GM13976 (cell line): ENCODE measurements at regions of chr14 and their contacts with region 1.

Region 1: GRCh38 chr14:44912041-44912869 is 49.5 kb downstream of the KLHL28 start:
- DNase-seq: no peak
- CTCF ChIP-seq: no peak

Region 2: GRCh38 chr14:44010071-44010470 is 902.2 kb before region 1 on chr14:
- in situ Hi-C with region 1: no loop called
- DNase-seq: no peak
- CTCF ChIP-seq: no peak

Region 3: DNA sequence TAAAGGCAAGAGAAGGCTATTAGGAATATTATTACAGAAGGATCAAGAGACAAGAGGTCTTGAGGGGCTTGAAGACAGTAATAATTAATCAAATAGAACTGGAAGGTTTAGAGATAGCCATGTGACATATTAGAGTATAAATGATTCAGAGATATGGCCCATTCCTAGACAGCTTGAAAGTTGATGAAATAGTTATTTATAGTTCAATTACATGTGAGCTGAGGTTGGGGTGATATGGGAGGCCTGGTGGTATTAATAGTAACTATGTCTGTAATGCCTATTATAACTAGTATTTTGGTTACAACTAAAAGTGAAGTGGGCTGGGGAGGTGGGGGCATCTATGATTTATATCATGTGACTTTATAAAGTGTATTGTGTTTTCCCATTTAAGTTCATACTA is 354.8 kb after region 1 on chr14:
- in situ Hi-C with region 1: loop called (anchors 10 kb)
- DNase-seq: no peak
- CTCF ChIP-seq: no peak